GM10248 (cell line): ENCODE measurements at regions of chr6 and their contacts with region 1.

Region 1: DNA sequence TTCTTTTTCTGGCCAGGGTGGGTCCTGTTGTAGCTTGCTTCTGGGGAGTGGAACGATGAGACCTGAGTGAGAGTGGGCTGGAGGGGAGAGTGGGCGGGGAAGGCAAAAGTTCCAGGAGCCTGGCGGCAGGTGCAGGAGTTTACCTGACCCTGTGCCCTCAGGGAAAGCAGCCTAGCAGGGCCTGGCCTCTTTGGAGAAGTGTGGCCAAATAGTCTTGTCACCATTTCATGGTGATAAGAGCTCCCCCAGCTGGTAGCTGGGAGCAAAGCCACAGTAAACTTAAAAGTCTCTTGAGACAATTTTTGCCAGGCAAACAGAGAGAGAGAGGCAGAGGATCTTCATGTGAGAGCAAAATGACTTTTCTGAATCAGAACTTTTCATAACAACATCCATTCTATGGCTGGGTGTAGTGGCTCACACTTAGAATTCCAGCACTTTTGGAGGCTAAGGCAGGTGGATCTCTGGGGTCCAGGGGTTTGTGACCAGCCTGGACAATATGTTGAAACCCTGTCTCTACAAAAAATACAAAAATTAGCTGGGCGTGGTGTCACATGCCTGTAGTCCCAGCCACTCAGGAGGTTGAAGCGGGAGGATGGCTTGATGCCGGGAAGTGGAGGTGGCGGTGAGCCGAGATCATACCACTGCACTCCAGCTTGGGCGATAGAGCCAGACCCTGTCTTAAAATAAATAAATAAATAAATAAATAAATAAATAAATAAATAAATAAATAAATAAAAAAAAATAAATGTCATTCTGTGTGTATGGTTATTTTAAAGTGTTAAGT is 161.8 kb upstream of the SCGN start:
- DNase-seq: peak; percentile 73
- CTCF ChIP-seq: peak; percentile 84

Region 2: DNA sequence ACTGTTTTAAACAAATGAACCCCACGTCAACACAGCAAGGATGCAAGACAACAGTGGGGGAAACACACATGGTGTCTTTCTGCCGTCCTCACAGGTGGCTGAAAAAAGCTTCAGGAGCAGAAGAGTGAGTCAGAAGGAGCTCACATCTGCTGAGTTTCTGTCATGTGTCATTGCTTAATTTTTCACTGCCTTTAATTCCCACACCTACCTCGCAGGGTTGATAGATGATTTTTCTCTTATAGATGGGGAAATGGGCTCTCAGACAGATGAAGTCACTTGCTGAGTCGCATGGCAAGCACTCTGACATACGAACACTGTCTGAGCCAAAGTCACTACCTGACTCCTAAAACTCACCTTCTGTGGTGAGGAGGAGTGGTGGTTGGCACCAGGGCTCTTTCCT is 239.3 kb before region 1 on chr6:
- CTCF ChIA-PET with region 1: interaction called, 15 read pairs
- POLR2A ChIA-PET with region 1: no interaction called
- DNase-seq: peak; percentile 29
- CTCF ChIP-seq: no peak

Region 3: DNA sequence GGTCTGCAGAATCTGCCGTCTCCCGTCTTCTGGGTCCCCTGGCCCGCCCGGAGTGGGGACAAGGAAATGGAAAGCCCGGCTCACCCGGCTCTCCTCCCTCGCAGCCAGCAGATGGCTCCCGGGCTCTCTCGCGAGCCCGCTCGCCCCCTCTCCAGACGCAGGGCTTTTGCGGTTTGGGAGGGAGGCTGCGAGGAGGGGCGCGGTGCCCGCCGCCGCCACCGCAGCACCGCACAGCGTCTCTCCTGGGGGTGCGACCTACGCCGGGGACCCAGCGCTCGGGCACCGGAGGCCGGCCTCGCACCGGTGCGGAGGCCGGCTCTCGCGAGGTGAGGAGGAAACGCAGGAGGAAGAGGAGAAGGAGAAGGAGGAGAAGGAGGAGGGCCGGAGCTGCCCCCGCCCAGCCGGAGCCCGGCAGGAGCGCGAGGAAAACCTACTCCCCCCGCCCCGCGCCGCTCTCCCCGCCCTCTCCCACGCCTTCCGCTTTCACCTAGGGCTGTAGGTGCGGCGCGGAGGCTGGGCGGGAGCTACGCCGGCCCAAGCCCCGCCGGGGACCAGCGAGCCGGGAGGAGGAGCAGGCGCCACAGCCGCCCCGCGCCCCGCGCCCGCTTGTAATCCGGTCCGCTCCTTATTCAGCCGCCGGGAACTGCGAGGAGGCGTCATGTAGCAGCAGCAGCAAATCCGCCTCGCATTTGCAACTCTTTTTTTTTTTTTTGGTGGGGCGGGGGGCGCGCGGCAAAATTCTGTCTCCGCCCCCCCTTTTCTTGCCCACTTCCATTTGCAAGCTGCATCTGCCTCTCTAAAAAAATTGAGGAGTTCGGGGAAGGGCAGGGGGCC is 211.1 kb before region 1 on chr6 and contains the start of gene CARMIL1:
- CTCF ChIA-PET with region 1: interaction called, 106 read pairs
- POLR2A ChIA-PET with region 1: no interaction called
- DNase-seq: peak; percentile 90
- CTCF ChIP-seq: peak; percentile 62

Region 4: DNA sequence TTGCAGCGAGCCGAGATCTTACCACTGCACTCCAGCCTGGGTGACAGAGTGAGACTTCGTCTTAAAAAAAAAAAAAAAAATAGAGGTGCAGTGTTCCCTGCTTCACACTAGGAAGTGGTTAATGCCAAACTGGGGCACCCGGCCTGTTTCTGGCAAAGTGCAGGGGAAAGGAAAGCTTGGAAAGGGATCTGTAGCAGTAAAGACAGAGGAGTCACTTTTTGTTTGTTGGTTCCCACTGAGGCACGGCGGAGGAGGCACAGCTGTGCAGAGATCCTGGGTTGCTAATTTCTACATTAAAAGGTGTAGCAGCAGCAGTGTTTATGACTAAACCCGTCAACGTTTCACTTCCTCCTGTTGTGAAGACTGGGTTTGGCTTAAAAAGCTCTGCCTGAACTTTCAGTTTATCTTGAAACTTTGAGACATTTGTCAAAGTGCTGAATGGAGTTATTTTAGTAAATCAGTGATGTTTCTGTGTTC is 85.5 kb before region 1 on chr6:
- CTCF ChIA-PET with region 1: interaction called, 11 read pairs
- POLR2A ChIA-PET with region 1: no interaction called
- DNase-seq: peak; percentile 46
- CTCF ChIP-seq: no peak

Region 5: DNA sequence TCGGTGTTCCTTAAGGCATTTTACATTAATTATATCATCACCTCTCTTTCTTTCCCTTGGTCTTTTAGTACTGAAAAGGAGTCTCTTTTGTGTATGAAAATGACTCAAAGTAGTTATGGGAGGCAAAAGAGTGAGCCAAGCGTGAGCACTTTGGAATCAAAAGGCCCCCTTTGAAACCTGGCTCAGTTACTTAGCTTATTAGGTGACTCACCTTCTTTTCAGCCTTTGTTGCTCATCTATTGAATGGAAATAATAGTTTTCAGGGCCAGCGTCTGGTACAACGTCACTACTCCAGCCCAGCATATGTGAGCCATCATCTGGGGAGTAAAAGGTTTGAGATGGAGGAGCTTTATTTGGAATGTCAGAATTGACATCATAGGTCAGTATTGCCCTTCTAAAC is 14.5 kb after region 1 on chr6:
- CTCF ChIA-PET with region 1: interaction called, 30 read pairs
- POLR2A ChIA-PET with region 1: no interaction called
- DNase-seq: no peak
- CTCF ChIP-seq: no peak

Region 6: GRCh38 chr6:25524542-25524941 is 34.3 kb after region 1 on chr6:
- CTCF ChIA-PET with region 1: interaction called, 17 read pairs
- POLR2A ChIA-PET with region 1: no interaction called
- DNase-seq: no peak
- CTCF ChIP-seq: no peak

Region 7: GRCh38 chr6:25564943-25565342 is 74.7 kb after region 1 on chr6:
- CTCF ChIA-PET with region 1: interaction called, 10 read pairs
- POLR2A ChIA-PET with region 1: no interaction called
- DNase-seq: no peak
- CTCF ChIP-seq: no peak